Heart left ventricle (tissue), 16 donors: ENCODE measurements at regions of chr18 and their contacts with region 1.

Region 1: GRCh38 chr18:74459889-74460288 is 2.8 kb upstream of the DIPK1C start:
- DNase-seq: peak in 2 of 5 donors; percentile 25 to 57
- ATAC-seq: peak in 2 of 4 donors; percentile 8 to 25
- H3K4me3 ChIP-seq: no peak overlapping the region
- H3K27ac ChIP-seq: peak overlapping the region in 7 of 12 donors; percentile 9 to 91 (median 38)
- H3K4me1 ChIP-seq: peaks cover 0 to 40% (median 15%) of the 10 kb centered on the region in 12 donors
- H3K27me3 ChIP-seq: peaks cover 0 to 31% (median under 1%) of the 10 kb centered on the region in 9 donors
- CTCF ChIP-seq: peak in 9 of 12 donors; percentile 18 to 49 (median 32)
- POLR2A ChIP-seq: no peak

Region 2: GRCh38 chr18:74407888-74408287 is 52.0 kb before region 1 on chr18:
- intact Hi-C with region 1: loop called in 1 of 10 experiments (anchors 10 kb)
- DNase-seq: no peak
- ATAC-seq: no peak
- H3K4me3 ChIP-seq: no peak overlapping the region
- H3K27ac ChIP-seq: no peak overlapping the region
- H3K4me1 ChIP-seq: peaks cover 0 to 12% (median 0%) of the 10 kb centered on the region in 12 donors
- H3K27me3 ChIP-seq: no peaks in the 10 kb centered on the region
- CTCF ChIP-seq: no peak
- POLR2A ChIP-seq: no peak

Region 3: DNA sequence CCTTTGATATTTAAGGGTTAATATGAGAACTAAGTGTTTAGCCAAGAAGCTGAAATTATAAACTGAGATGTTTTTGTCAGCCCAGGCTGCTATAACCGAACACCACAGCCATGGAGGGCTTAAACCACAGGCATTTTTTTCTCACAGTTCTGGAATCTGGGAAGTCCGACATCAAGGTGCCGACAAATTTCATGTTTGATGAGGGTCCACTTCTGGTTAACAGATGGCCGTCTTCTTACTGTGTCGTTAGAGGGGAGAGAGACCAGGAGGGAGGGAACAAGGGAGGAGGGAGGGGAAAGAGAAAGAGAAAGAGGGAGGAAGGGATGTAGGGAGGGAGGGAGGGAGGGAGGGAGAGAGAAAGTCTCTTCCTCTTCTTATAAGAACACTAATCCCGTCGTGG is 29.8 kb after region 1 on chr18:
- intact Hi-C with region 1: loop called in 2 of 10 experiments (anchors 2 to 5 kb)
- DNase-seq: no peak
- ATAC-seq: no peak
- H3K4me3 ChIP-seq: peak overlapping the region in 1 of 12 donors; percentile 13
- H3K27ac ChIP-seq: no peak overlapping the region
- H3K4me1 ChIP-seq: peaks cover 0 to 19% (median 7%) of the 10 kb centered on the region in 12 donors
- H3K27me3 ChIP-seq: no peaks in the 10 kb centered on the region
- CTCF ChIP-seq: no peak
- POLR2A ChIP-seq: no peak